Ascending aorta (tissue), 2 donors: ENCODE measurements at regions of chr13 and their contacts with region 1.

Region 1: DNA sequence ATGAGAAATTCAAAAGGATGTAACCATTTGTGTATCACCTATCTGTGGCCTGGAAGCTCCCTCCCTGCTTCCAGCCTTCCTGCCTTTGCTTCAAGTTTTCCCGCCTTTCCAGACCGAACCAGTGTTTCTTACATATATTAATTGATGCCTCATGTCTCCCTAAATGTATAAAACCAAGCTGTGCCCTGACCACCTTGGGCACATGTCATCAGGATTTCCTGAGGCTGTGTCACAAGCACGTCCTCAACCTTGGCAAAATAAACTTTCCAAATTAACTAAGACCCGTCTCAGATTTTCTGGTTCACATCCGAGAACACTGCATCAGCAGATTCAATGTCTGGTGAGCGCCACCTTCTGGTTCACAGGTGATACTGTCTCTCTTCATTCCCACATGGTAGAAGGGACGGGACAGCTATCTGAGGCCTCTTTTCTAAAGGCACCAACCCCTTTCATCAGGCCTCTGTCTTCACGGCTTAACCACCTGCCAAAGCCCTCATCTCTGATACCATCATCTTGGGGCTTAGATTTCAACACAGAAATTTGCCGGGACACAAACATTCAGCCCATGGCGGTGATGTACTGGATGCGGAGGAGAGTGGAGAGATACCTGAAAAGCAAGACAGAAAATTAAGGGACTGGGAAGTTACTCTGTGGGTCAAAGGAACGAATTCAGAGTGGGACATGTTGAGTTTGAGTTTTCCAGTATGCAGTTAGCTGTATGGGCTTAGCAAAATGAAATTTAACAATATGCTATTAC is 58.7 kb upstream of the PABPC3 start:
- DNase-seq: no peak
- H3K4me3 ChIP-seq: no peak overlapping the region
- H3K27ac ChIP-seq: no peak overlapping the region
- H3K4me1 ChIP-seq: no peaks in the 10 kb centered on the region
- H3K27me3 ChIP-seq: no peaks in the 10 kb centered on the region
- CTCF ChIP-seq: peak in 2 of 3 experiments; percentile 62 to 72

Region 2: DNA sequence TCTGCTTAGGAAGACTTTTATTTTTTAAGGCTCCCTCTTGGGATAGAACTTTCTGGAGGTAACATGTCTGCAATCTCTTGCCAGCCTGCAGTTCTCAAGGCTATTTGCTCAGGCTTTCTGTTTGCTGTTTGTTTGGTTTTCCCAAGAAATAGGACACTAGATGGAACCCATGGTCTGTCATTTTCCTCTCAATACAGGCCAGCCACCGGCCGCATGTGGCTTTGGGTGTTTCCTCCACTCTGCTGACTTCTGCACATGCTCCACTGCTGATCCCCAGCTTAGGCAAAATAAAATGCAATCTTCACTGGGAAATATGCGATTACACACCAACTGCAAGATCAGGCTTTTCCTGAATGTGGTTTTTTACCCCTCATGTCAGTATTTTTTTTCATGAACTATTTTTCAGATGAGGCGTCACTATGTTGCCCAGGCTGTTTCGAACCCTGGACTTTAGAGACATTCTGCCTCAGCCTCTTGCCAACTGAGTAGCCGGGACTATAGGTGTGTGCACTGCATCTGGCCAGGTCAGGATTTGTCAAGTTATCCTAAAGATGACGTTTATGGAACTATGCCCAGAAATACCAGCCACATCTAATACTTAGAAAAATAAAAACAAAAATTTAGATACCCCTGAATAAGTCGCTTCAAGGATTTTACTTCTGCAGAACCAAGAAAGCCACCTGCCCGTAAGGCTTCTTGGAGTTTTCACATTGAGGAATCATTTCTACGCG is 35.6 kb before region 1 on chr13:
- intact Hi-C with region 1: loop called (anchors 2 kb)
- DNase-seq: no peak
- H3K4me3 ChIP-seq: no peak overlapping the region
- H3K27ac ChIP-seq: no peak overlapping the region
- H3K4me1 ChIP-seq: no peaks in the 10 kb centered on the region
- H3K27me3 ChIP-seq: no peaks in the 10 kb centered on the region
- CTCF ChIP-seq: no peak